ENCODE measurements at regions of chr22 and their contacts with region 1.

Region 1: GRCh38 chr22:36546092-36546804 is 17.3 kb upstream of the EIF3D start:
- DNase-seq: peak; percentile 48
- ATAC-seq: peak; percentile 83
- H3K4me3 ChIP-seq: no peak overlapping the region
- H3K27ac ChIP-seq: no peak overlapping the region
- H3K4me1 ChIP-seq: 0 out of 2 replicates have a peak, but pooled peaks cover 9% of the 10 kb centered on the region
- H3K27me3 ChIP-seq: peaks cover 4 to 39% of the 10 kb centered on the region in 2 experiments; a peak in 4 of 5 replicates
- CTCF ChIP-seq: peak; percentile 71
- EP300 ChIP-seq: no peak
- POLR2A ChIP-seq: no peak
- RAD21 ChIP-seq: no peak

Region 2: DNA sequence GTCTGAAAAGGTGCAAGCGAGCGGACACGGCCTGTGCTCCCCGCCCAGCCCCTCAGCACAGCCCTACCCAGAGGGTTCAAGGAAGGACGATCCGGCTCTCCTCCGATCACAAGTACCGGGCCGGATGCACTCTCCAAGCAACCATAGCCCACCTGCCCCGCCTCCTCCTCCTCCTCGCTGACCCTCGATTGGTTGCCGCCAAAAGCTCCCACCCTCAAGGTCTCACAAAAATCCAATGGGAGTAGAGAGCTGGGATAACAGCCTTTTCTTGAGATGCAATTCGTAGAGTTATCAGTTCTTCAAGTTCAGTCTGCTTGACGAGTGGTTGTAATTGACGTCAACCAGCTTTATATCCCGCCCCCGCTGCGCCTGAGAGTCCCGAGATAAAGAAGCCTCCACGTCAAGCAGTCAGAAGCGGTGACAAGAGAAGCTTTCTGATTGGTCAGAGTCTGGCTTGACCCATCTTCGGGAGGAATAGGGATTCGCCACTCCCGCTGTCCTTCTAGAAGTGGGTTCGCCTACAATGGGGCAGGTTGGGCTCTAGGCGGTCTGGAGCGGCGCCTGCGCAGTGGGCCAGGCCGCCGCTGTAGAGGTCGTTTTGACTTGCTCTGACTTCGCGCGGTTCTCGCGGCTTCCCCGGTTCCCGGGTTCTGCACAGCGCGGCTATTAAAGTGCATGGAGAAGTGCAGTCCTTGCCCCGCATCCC is 229.9 kb after region 1 on chr22 and contains the start of gene IFT27:
- CTCF ChIA-PET with region 1: no interaction called
- POLR2A ChIA-PET with region 1: no interaction called
- in situ Hi-C with region 1: loop called (anchors 10 kb)
- intact Hi-C with region 1: loop called (anchors 10 kb)
- DNase-seq: peak; percentile 82
- ATAC-seq: peak; percentile 90
- H3K4me3 ChIP-seq: 0 out of 6 replicates have a peak within 1 kb of the TSS, but pooled peaks of 1 of the 3 experiments have one; percentile 22
- H3K27ac ChIP-seq: no peak within 1 kb of the TSS
- H3K4me1 ChIP-seq: peaks cover 11% of the 10 kb centered on the region
- H3K27me3 ChIP-seq: peaks cover 3 to 59% of the 10 kb centered on the region in 2 experiments; a peak in 4 of 5 replicates
- CTCF ChIP-seq: no peak
- EP300 ChIP-seq: no peak
- POLR2A ChIP-seq: no peak
- RAD21 ChIP-seq: no peak
- total RNA-seq, gene IFT27: 0.33 TPM in 1 of 2 replicates, not detected in the other